ENCODE measurements at regions of chr6 and their contacts with region 1.

Region 1: GRCh38 chr6:135604035-135604860 is 106.7 kb upstream of the AHI1 start:
- DNase-seq: peak; percentile 56
- H3K4me3 Mint-ChIP-seq: no peak overlapping the region
- H3K27ac Mint-ChIP-seq: peak overlapping the region; percentile 90
- H3K4me1 Mint-ChIP-seq: peaks cover 31% of the 10 kb centered on the region
- H3K27me3 Mint-ChIP-seq: no peaks in the 10 kb centered on the region

Region 2: GRCh38 chr6:134840086-134840867 is 764.0 kb before region 1 on chr6:
- intact Hi-C with region 1: no loop called
- DNase-seq: no peak
- H3K4me3 Mint-ChIP-seq: no peak overlapping the region
- H3K27ac Mint-ChIP-seq: no peak overlapping the region
- H3K4me1 Mint-ChIP-seq: no peaks in the 10 kb centered on the region
- H3K27me3 Mint-ChIP-seq: peaks cover 20% of the 10 kb centered on the region

Region 3: GRCh38 chr6:135577059-135577538 is 27.1 kb before region 1 on chr6:
- intact Hi-C with region 1: loop called (anchors 1 kb)
- DNase-seq: peak; percentile 74
- H3K4me3 Mint-ChIP-seq: peak overlapping the region; percentile 39
- H3K27ac Mint-ChIP-seq: peak overlapping the region; percentile 96
- H3K4me1 Mint-ChIP-seq: peaks cover 45% of the 10 kb centered on the region
- H3K27me3 Mint-ChIP-seq: no peaks in the 10 kb centered on the region

Region 4: GRCh38 chr6:135586841-135587240 is 17.4 kb before region 1 on chr6:
- intact Hi-C with region 1: loop called (anchors 2 kb)
- DNase-seq: peak; percentile 89
- H3K4me3 Mint-ChIP-seq: peak overlapping the region; percentile 34
- H3K27ac Mint-ChIP-seq: peak overlapping the region; percentile 97
- H3K4me1 Mint-ChIP-seq: peaks cover 70% of the 10 kb centered on the region
- H3K27me3 Mint-ChIP-seq: no peaks in the 10 kb centered on the region

Region 5: DNA sequence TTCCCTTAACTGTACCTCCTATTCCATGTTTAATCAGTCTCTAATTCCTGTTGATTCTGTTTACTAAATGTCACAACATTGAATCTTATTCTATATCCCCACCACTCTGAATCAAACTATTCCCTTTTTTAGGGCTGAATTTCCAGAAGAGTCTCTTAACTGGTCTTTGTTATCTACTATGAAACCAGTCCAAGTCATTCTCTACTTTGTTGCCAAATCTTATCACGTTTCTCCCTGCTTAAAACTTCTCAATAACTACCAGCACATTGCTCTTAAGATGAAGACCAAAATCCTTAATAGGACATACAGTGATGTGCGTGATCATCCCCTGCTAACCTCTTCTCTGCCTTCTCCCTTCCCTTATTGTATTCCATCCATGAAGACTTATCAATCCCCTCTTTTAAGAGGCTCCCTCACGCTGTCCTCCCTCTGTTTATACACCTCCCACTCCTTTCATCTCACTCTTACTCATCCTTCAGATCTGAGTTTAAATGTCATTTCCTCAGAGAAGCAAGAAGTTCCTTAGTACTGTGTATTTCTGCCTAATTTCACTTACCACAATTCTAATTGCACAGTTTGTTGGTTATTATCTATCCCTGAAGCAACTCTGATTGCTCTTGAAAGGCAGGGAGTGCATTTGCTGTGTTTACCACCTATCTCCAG is 36.3 kb after region 1 on chr6:
- intact Hi-C with region 1: loop called (anchors 1 kb)
- DNase-seq: no peak
- H3K4me3 Mint-ChIP-seq: peak overlapping the region; percentile 46
- H3K27ac Mint-ChIP-seq: peak overlapping the region; percentile 87
- H3K4me1 Mint-ChIP-seq: peaks cover 53% of the 10 kb centered on the region
- H3K27me3 Mint-ChIP-seq: no peaks in the 10 kb centered on the region

Measured in activated CD4-positive, alpha-beta T cell treated with anti-CD3 and anti-CD28 coated beads, Interleukin-2, amount 10 ng/mL, durations not matched to agents 24 days and 14 days (primary cell).